ENCODE measurements at regions of chr16 and their contacts with region 1.

Region 1: GRCh38 chr16:70454222-70455034 is at the start of gene FCSK:
- DNase-seq: peak; percentile 86
- H3K4me3 ChIP-seq: peak within 1 kb of the TSS; percentile 72 to 95 (median 89)
- H3K27ac ChIP-seq: peak within 1 kb of the TSS; percentile 100
- H3K4me1 ChIP-seq: peaks cover 6% of the 10 kb centered on the region
- H3K27me3 ChIP-seq: no peaks in the 10 kb centered on the region
- CTCF ChIP-seq: no peak
- POLR2A ChIP-seq: peak; percentile 33
- total RNA-seq, gene FCSK: 13.2 and 18.0 TPM in 2 replicates

Region 2: DNA sequence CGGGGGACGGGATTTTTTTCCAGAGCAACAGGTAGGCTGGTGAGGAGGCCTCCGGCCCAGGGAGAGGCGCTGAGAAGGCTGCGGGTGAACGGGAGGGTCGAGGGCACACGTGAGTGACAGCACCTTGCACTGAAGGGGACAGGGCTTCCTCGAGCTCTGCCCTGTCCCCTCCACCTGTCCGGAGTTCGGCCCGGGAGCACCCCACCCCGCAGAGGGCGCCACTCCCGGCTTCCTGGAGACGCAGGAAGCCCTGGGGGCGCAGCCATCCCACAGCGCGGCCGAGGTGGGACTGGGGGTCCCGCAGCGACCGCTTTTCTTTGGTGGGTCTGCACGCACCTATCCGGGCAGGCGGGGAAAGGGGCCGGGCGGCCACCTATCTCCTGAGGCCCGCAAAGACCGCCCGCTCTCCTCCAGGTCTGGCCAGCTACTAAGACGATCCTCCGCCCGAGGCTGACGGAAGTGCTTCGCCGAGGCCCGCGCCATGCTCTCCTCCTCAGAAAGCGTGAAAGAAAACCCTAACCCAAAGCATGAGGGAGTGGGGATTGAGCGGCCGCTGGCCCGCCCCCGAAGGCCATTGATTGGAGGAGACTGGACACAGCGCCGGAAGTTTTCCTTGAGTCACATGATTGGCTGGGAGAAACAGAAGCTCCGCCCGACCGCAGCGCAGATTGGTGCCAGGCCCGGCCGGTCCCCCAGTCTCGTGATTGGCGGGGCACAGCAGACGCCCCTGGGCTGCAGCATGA is 73.4 kb before region 1 on chr16:
- CTCF ChIA-PET with region 1: interaction called, 12 read pairs
- POLR2A ChIA-PET with region 1: no interaction called
- dilution Hi-C with region 1: no loop called
- intact Hi-C with region 1: loop called (anchors 1 kb)
- DNase-seq: peak; percentile 98
- H3K4me3 ChIP-seq: peak overlapping the region; percentile 51 to 59 (median 54)
- H3K27ac ChIP-seq: no peak overlapping the region
- H3K4me1 ChIP-seq: peaks cover 6% of the 10 kb centered on the region
- H3K27me3 ChIP-seq: no peaks in the 10 kb centered on the region
- CTCF ChIP-seq: peak; percentile 6 to 9
- POLR2A ChIP-seq: peak; percentile 94

Region 3: DNA sequence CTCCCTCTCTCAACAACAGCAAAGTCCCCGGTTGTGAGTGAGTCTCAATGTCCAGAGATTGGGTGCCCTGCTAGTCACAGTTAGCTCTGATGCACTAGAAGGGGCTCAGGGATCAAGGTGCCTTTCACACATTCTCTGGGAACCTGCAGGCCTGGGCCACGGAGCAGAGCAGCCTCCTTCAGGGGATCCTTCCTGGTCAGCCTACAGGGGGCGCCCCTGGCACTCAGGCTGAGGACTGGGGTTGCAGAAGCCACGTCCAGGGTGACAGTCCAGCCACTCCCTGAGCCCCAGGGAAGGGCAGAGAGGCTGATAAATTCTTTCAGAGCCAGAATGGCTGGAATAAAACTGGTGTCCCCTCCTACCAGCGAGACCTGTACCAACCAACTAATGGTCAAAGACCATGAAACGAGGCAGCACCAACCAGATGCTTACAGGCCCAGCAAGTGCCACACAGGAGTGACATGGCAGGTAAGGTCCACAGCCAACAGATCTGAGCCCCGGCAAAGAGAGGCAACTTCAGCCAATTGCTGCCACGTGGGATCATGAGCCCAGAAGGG is 59.0 kb before region 1 on chr16:
- CTCF ChIA-PET with region 1: interaction called, 8 read pairs
- POLR2A ChIA-PET with region 1: no interaction called
- dilution Hi-C with region 1: no loop called
- intact Hi-C with region 1: loop called (anchors 1 kb)
- DNase-seq: peak; percentile 59
- H3K4me3 ChIP-seq: no peak overlapping the region
- H3K27ac ChIP-seq: no peak overlapping the region
- H3K4me1 ChIP-seq: no peaks in the 10 kb centered on the region
- H3K27me3 ChIP-seq: no peaks in the 10 kb centered on the region
- CTCF ChIP-seq: peak; percentile 76 to 89
- POLR2A ChIP-seq: no peak

Region 4: GRCh38 chr16:70428178-70428998 is 26.0 kb before region 1 on chr16:
- CTCF ChIA-PET with region 1: no interaction called
- POLR2A ChIA-PET with region 1: no interaction called
- dilution Hi-C with region 1: no loop called
- intact Hi-C with region 1: loop called (anchors 1 kb)
- DNase-seq: peak; percentile 96
- H3K4me3 ChIP-seq: no peak overlapping the region
- H3K27ac ChIP-seq: peak overlapping the region; percentile 86
- H3K4me1 ChIP-seq: peaks cover 54% of the 10 kb centered on the region
- H3K27me3 ChIP-seq: no peaks in the 10 kb centered on the region
- CTCF ChIP-seq: no peak
- POLR2A ChIP-seq: peak; percentile 77

Measured in endothelial cell of umbilical vein (primary cell).